Right ventricle myocardium inferior (tissue), 1 donor: ENCODE measurements at regions of chr3 and their contacts with region 1.

Region 1: GRCh38 chr3:141011232-141011996 is 39.7 kb upstream of the SPSB4 start:
- DNase-seq: peak; percentile 87
- ATAC-seq: peak; percentile 77

Region 2: DNA sequence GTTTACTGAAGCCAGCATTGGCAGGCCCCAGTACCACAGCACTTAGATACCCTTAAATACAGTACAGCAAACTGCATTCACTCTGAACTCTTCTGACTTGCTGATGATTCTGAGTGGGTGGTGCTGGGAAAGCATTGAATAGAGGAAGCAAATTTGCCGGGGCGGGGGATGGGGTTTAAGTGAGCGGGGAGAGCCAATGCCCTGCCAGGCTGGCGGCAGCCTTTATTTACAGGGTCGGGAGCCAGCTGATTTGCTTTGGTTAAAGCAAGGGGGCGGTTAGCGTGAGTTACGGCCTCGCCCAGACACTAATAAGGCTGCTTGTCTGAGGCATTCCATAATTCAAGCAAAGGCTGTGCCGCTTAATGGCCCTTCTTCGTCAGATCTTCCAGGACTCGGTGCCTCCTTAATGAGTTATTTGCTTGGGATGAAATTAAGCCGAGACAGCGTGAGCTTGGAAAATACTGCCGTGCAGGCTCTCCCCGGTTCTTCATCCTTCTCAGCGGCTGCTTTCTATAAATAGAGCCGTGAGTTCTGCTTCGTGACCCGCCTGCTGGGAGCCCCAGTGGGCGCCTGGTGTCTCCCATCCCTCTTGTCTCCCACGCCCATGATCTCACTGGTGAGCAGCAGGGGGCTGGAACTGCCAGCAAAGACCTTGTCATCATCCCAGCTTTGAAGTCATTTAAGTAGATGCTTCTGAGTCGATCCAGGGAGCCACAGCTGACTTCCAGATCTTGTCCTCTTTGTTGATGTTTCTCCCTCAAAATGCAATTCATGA is 65.6 kb after region 1 on chr3:
- intact Hi-C with region 1: no loop called
- DNase-seq: no peak
- ATAC-seq: peak; percentile 58

Region 3: GRCh38 chr3:141105828-141106628 is 94.6 kb after region 1 on chr3:
- intact Hi-C with region 1: loop called (anchors 2 kb)
- DNase-seq: no peak
- ATAC-seq: no peak